H1 (cell line): ENCODE measurements at regions of chr1 and their contacts with region 1.

Region 1: GRCh38 chr1:156625436-156626078 is 6.3 kb downstream of the HAPLN2 start:
- DNase-seq: peak in 1 of 2 experiments; percentile 84
- H3K4me3 ChIP-seq: peak overlapping the region; percentile 44 to 71 (median 46)
- H3K27ac ChIP-seq: no peak overlapping the region
- H3K4me1 ChIP-seq: peaks cover 0 to 9% (median 2%) of the 10 kb centered on the region in 4 experiments; a peak in 5 of 7 replicates
- H3K27me3 ChIP-seq: peaks cover 31 to 50% (median 38%) of the 10 kb centered on the region in 4 experiments
- CTCF ChIP-seq: peak; percentile 69 to 84 (median 75)
- EP300 ChIP-seq: no peak
- POLR2A ChIP-seq: no peak
- RAD21 ChIP-seq: peak; percentile 77 to 81

Region 2: DNA sequence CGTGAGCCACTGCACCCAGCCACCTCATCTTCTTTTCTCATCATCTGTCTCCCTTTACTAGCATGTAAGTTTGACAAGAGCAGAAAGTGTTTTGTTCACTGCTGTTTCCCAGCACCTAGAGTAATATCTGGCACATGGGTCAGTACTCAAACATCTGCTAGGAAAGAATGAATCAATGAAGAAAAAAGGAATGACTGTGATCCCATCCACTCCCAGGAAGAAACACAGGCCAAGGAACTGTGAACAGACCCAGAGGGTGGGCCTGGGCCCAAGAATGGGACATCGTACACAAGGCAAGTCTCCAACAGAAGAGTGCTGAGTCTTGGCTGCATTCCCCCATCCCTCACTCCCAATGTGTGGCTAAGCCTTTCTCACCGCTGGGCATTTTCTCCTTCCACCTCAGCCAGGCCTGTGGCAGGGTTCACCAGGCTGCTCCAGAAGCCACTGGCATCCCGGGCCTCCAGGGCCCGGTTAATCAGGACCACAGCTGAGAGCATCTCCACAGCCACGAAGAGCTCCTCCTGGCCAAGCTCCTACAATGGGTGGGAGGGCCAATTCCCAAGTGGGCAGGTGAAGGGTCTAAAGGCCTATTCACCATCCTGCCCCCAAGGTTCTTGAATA is 71.6 kb before region 1 on chr1:
- CTCF ChIA-PET with region 1: no interaction called
- POLR2A ChIA-PET with region 1: no interaction called
- DNase-seq: no peak
- H3K4me3 ChIP-seq: no peak overlapping the region
- H3K27ac ChIP-seq: no peak overlapping the region
- H3K4me1 ChIP-seq: no peaks in the 10 kb centered on the region
- H3K27me3 ChIP-seq: no peaks in the 10 kb centered on the region
- CTCF ChIP-seq: no peak
- EP300 ChIP-seq: no peak
- POLR2A ChIP-seq: no peak
- RAD21 ChIP-seq: no peak

Region 3: DNA sequence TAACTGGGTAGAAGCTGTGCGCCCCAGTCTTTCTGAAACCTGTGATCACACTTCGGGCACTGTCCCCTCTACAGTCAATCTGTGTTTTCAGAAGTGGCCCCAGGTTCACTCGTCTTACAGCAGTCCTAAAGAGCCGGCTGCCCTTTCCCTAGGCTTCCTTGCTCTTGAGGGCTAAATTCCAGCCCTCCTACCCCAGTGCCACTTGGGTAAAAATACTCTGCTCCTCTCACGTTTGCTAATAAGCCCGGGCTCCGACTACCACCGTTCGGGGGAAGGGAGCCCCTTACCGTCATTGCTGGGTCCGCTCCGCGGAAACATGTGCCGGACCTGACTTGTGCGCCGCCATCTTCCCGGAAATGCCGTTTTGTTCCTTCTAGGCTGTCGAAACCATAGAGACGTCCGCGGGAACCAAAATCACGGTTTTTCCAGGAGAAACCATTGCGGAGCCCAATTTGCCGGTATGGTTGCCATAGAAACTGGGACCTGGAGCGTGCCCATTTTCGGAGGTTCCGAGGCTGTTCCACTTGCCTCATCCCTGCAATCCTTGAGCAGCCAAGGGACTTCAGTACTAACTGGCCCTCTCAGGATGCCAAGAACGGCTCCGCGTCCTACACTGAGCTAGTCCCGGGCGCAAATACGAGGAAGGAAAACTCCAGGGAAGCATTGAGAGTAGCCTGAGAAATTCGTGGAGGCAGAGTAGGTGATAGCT is 24.3 kb before region 1 on chr1 and contains the start of gene GPATCH4:
- CTCF ChIA-PET with region 1: interaction called, 25 read pairs
- POLR2A ChIA-PET with region 1: interaction called, 4 read pairs
- DNase-seq: peak in 1 of 2 experiments; percentile 86
- H3K4me3 ChIP-seq: peak within 1 kb of the TSS; percentile 86 to 97 (median 91)
- H3K27ac ChIP-seq: peak within 1 kb of the TSS; percentile 73
- H3K4me1 ChIP-seq: peaks cover 0 to 8% (median 3%) of the 10 kb centered on the region in 4 experiments; a peak in 5 of 7 replicates
- H3K27me3 ChIP-seq: no peaks in the 10 kb centered on the region
- CTCF ChIP-seq: no peak
- EP300 ChIP-seq: no peak
- POLR2A ChIP-seq: peak; percentile 66 to 80; a peak in 2 of 3 replicates
- RAD21 ChIP-seq: no peak
- total RNA-seq, gene GPATCH4: 47.9 and 48.5 TPM in 2 replicates

Region 4: DNA sequence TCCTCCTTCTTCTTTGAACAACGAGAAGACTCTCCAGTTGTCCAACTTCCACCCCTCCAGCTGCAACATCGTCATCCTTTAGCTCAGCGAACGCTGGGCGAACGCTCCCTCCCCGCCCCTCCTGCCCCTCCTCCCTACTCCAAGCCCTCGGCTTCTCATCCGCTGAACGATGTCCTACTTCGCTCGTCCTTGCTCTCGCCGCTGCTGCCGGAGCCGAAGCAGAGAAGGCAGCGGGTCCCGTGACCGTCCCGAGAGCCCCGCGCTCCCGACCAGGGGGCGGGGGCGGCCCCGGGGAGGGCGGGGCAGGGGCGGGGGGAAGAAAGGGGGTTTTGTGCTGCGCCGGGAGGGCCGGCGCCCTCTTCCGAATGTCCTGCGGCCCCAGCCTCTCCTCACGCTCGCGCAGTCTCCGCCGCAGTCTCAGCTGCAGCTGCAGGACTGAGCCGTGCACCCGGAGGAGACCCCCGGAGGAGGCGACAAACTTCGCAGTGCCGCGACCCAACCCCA is 16.3 kb after region 1 on chr1 and contains the start of gene BCAN:
- CTCF ChIA-PET with region 1: interaction called, 789 read pairs
- POLR2A ChIA-PET with region 1: interaction called, 15 read pairs
- DNase-seq: peak in 1 of 2 experiments; percentile 80
- H3K4me3 ChIP-seq: peak within 1 kb of the TSS; percentile 26 to 72 (median 53)
- H3K27ac ChIP-seq: no peak within 1 kb of the TSS
- H3K4me1 ChIP-seq: peaks cover 5 to 22% (median 15%) of the 10 kb centered on the region in 4 experiments
- H3K27me3 ChIP-seq: peaks cover 11 to 83% (median 63%) of the 10 kb centered on the region in 4 experiments
- CTCF ChIP-seq: no peak
- EP300 ChIP-seq: no peak
- POLR2A ChIP-seq: no peak
- RAD21 ChIP-seq: no peak
- total RNA-seq, gene BCAN: 3.8 and 4.5 TPM in 2 replicates

Region 5: DNA sequence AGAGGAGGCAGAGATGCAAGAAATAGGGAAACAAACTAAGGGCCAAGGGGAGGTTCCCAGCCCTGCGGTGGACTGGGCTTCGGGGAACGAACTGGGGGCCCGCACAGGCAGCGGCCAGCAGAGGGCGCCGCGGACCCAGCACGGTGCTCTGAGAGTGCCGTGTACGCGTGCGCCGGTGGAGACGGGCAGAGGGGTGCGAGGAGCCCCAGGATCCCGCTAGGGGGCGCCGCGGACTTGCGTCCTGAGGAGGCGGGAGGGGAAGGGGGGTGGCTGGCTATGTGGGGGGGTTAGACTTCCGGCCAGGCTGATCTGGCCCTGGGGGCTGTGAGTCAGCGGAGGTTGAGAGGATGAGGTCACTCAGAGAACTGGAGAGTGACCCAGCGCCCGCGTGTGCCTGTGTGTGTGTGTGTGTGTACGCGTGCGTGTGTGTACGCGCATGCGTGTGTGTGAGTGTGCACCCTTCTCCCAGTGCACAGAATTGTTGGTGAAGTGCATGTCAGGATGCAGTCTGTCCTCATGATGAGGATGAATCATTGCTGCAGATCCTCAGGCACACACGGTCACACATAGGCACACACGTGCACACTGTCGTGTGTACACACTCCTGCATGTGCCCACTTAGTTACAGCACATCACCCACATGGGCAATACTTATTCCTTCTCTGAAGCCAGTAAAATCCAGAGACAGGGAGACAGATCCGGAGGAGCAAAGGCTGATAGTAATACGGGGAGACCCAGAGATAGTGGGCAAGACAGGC is 34.6 kb after region 1 on chr1:
- CTCF ChIA-PET with region 1: interaction called, 520 read pairs
- POLR2A ChIA-PET with region 1: interaction called, 19 read pairs
- DNase-seq: peak; percentile 96 to 100
- H3K4me3 ChIP-seq: no peak overlapping the region
- H3K27ac ChIP-seq: peak overlapping the region; percentile 54; the same call in 1 of the 2 replicates
- H3K4me1 ChIP-seq: peaks cover 19 to 49% (median 43%) of the 10 kb centered on the region in 4 experiments
- H3K27me3 ChIP-seq: peaks cover 2 to 44% (median 33%) of the 10 kb centered on the region in 4 experiments
- CTCF ChIP-seq: peak in 2 of 3 experiments; percentile 97 to 99; a peak in 3 of 4 replicates
- EP300 ChIP-seq: peak in 1 of 2 experiments; percentile 71; a peak in 1 of 3 replicates
- POLR2A ChIP-seq: peak in 1 of 2 experiments; percentile 30; a peak in 1 of 3 replicates
- RAD21 ChIP-seq: peak; percentile 87 to 96

Region 6: DNA sequence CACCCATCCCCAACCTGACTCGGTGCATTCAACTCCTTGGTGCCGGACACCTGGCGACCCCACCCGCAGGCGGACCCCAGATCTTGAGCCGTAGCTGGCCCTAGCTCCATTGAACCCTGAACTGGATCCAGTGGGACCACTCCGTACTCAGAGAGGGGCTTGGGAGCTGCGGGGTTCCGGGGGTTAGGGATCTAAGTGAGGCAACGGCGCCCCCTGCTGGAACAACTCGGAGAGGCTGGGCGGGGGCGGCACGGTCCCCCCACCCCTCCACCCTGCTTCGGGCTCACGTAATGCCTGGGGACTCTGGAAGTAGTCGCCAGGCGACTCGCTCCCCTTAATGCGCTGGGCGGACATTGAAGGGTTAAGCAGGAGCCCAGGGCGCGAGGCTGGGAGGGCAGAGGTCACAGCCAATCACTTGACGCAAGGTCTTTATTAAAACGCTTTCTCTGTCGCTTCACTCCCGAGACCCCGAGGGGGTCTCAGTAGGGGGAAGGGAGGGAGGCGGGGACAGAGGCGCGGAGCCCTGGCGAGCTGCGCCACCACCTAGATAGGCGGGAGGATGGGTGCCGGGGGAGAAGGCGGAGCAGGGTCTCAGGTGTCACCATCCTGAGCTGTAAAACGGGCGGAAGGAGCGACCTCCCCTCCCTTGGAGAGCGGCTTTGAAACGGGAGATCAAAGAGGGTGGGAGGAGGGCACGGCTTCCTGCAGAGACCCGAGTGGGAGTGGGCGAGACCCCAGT is 80.5 kb after region 1 on chr1:
- CTCF ChIA-PET with region 1: interaction called, 42 read pairs
- POLR2A ChIA-PET with region 1: interaction called, 3 read pairs
- DNase-seq: peak; percentile 86 to 98
- H3K4me3 ChIP-seq: peak overlapping the region; percentile 50 to 80 (median 70)
- H3K27ac ChIP-seq: peak overlapping the region; percentile 79
- H3K4me1 ChIP-seq: peaks cover 27 to 57% (median 45%) of the 10 kb centered on the region in 4 experiments
- H3K27me3 ChIP-seq: peaks cover 0 to 19% (median 8%) of the 10 kb centered on the region in 4 experiments; a peak in 4 of 7 replicates
- CTCF ChIP-seq: peak; percentile 72 to 86 (median 81)
- EP300 ChIP-seq: peak in 1 of 2 experiments; percentile 51; a peak in 1 of 3 replicates
- POLR2A ChIP-seq: no peak
- RAD21 ChIP-seq: peak; percentile 78 to 88

Region 7: DNA sequence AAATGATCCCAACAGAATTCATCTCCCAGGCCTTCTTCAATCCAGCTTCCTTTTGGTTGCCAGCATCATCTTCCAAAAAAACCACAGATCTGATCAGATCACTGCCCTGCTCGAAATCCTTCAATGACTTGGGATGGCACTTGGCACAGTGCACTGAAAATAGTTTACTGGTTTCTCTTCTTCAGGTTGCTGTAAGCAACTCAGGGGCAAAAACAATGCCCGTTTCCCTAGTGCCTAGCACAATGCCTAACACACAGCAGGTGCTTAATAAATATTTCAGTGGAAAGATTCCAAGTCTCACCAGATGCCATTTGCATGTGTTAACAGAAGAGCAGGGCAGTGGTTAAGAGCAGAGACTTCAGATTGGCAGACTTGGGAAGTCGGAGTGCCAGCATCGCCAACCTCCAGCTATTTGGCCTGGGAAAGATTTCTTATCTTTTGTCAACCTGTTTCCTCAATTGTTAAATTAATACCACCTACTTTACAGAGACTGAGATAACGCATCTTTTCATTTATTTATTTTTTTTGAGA is 91.8 kb after region 1 on chr1:
- CTCF ChIA-PET with region 1: interaction called, 12 read pairs
- POLR2A ChIA-PET with region 1: no interaction called
- DNase-seq: no peak
- H3K4me3 ChIP-seq: no peak overlapping the region
- H3K27ac ChIP-seq: no peak overlapping the region
- H3K4me1 ChIP-seq: peaks cover 2 to 8% (median 4%) of the 10 kb centered on the region in 4 experiments; a peak in 4 of 7 replicates
- H3K27me3 ChIP-seq: no peaks in the 10 kb centered on the region
- CTCF ChIP-seq: no peak
- EP300 ChIP-seq: no peak
- POLR2A ChIP-seq: no peak
- RAD21 ChIP-seq: no peak